Dorsolateral prefrontal cortex (tissue), 120 donors: ENCODE measurements at regions of chr10 and their contacts with region 1.

Region 1: GRCh38 chr10:19811540-19811939 is 4.7 kb upstream of the PLXDC2 start:
- DNase-seq: peak in 5 of 10 donors; percentile 28 to 65 (median 53)
- H3K4me3 ChIP-seq: no peak overlapping the region
- H3K27ac ChIP-seq: peak overlapping the region in 4 of 59 donors; percentile 3 to 20 (median 11)
- H3K27me3 ChIP-seq: no peaks in the 10 kb centered on the region
- CTCF ChIP-seq: peak; percentile 18 to 78 (median 62)

Region 2: DNA sequence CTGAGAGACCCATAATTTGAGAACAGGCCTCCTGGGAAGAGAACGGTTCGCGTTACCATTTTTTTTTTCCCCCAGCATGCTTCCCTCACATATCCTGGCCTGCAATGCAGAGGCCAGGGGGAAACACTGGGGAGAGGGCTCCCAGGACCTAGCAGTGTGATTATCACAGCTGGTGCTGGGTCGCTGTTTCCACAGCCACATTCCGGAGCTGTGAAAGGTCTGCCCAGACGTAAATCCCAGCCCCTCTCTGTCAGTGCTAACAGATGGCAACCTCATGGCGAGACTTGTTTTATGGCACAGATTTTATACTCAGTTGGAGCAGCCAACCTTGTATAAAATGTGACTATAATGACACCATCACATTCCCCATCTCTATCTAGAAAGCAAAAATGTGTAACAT is 155.2 kb after region 1 on chr10:
- intact Hi-C with region 1: no loop called
- DNase-seq: no peak
- H3K4me3 ChIP-seq: no peak overlapping the region
- H3K27ac ChIP-seq: peak overlapping the region in 49 of 59 donors; percentile 0 to 97 (median 59)
- H3K27me3 ChIP-seq: no peaks in the 10 kb centered on the region
- CTCF ChIP-seq: no peak

Region 3: GRCh38 chr10:20771051-20771450 is 959.5 kb after region 1 on chr10:
- intact Hi-C with region 1: loop called in 1 of 2 experiments (anchors 5 kb)
- DNase-seq: no peak
- H3K4me3 ChIP-seq: no peak overlapping the region
- H3K27ac ChIP-seq: no peak overlapping the region
- H3K27me3 ChIP-seq: peaks cover 0 to 13% (median 0%) of the 10 kb centered on the region in 45 donors
- CTCF ChIP-seq: no peak